ENCODE measurements at regions of chr6 and their contacts with region 1.

Region 1: DNA sequence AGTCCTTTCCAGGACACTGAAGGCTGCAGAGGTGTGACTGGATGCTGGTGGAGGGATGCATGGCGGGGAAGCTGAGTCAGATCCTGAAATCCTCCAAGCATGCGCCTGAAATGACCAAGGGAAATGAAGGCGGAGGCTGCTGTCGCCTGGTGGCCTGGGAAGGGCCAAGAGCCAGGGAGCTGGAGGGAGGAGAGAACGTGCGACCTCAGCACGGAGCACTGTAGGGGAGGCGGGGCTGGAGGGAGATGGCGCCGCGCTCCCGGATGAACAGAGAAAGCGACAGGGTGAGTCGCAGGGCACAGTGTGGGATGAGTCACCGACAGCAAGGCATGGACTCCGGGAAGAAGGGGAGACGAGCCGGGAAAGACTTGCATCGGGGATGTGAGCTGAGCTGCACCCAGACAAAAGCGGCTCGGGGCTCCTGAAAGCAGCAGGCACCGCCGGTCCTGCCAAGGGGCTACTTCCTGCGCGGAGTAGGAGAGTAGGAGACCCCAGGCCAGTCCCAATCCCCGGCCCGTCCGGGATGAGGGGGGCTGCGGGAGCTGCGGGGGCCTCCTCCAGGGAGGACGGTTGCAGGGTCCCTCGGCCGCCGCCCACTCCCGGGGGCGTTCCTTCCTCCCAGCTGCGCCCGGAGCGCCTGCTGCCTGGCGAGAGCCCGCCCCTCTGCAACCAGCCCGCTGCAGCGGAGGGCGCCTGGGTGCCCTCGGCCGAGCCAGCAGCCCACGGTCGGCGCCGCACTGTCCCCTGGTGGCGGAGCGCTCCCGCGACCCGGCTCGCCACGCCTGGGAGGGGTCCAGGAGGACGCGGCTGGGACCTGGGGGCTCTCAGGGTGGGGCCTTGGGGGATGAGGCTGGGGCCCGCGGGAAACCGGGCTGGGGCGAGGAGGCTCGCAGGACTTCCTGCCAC is 11.0 kb upstream of the NQO2 start:
- DNase-seq: peak; percentile 89
- H3K4me3 ChIP-seq: peak overlapping the region; percentile 75
- H3K27ac ChIP-seq: peak overlapping the region; percentile 89
- H3K4me1 ChIP-seq: peaks cover 16% of the 10 kb centered on the region
- CTCF ChIP-seq: peak; percentile 80

Region 2: DNA sequence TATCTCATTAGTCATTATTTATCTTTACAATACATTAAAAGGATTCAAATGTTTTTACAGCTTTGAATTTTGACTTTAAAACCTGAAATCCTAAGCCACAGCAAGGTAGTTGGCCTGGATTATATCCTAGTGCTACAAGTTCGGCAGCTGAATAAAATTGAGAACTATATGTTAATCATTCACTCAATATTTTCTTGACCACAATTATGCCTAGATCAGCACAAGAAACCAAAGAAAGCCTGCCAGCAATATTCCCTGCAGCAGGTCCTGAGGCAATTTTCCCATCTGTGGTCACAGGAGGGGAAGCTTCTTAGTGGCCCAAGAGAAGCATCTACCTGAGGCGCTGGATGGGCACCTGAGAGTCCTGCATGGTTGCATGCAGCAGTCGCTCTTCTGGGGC is 926.8 kb before region 1 on chr6:
- CTCF ChIA-PET with region 1: no interaction called
- POLR2A ChIA-PET with region 1: interaction called, 10 read pairs
- intact Hi-C with region 1: no loop called
- DNase-seq: no peak
- H3K4me3 ChIP-seq: no peak overlapping the region
- H3K27ac ChIP-seq: no peak overlapping the region
- H3K4me1 ChIP-seq: no peaks in the 10 kb centered on the region
- CTCF ChIP-seq: no peak

Region 3: DNA sequence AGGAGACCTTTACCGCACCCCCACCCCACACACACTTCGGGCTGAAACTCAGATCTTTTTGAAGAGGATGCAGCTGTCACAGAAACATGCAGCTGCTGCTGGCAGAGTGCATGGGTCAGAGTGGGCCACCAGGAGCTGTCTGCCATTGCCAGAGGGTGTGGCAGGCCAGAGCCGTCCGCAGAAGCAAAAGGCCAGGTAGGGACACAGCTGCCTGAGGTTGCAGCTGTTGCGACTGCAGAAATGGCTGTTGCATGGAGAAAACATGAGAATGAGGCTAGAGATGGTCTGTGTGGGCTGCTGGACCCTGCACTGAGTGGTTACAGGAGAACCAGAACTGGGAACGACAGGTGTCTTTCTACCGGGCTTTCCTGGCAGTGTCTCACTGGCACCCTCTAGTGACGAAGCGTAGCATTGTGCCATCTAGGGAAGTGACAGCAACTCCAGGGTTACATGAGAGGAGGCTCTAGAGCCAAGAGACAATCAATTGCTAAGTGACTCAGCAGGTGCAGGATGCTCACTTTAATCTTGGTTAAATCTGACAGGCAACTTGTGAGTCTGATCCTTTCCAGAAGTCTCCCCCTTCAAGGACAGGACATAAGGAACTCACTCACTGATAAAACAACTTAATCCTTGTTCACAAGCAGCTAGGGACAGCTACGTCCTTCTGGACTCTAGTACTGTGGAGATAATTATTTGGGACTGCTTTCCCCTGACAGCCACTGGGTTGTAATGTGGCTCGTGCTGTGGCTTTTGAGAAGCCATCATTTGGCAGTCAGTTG is 56.5 kb before region 1 on chr6:
- CTCF ChIA-PET with region 1: no interaction called
- POLR2A ChIA-PET with region 1: interaction called, 4 read pairs
- intact Hi-C with region 1: loop called (anchors 1 kb)
- DNase-seq: peak; percentile 90
- H3K4me3 ChIP-seq: peak overlapping the region; percentile 51
- H3K27ac ChIP-seq: peak overlapping the region; percentile 30
- H3K4me1 ChIP-seq: peaks cover 25% of the 10 kb centered on the region
- CTCF ChIP-seq: peak; percentile 99

Region 4: DNA sequence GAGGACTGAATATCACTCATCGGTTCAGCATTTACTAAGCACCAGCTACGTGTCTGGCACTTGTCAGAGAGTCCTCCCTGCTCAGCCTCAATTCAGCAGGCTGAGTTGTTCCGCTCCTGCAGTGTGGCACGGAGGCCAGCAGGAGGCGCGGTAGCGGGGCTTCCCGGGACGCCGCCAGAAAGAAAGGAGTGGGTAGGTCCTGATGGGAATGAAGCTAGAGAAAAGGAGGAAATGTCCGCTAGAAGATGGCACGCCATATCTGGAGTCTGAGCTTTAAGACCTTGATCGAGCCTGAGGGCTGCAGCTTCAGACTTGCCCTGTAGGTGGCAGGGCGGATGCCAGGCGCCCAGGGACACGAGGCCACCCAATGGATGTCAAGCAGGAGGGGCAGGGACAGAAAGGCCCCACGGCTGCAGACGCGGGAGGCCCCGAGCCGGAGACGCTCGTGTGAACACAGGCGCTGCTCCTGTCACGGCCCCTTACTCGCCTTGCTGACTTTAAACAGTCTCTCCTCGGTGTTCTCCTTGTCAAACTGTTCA is 36.1 kb before region 1 on chr6:
- CTCF ChIA-PET with region 1: interaction called, 27 read pairs
- POLR2A ChIA-PET with region 1: interaction called, 4 read pairs
- intact Hi-C with region 1: loop called (anchors 1 kb)
- DNase-seq: peak; percentile 82
- H3K4me3 ChIP-seq: peak overlapping the region; percentile 48
- H3K27ac ChIP-seq: no peak overlapping the region
- H3K4me1 ChIP-seq: peaks cover 20% of the 10 kb centered on the region
- CTCF ChIP-seq: peak; percentile 100

Region 5: GRCh38 chr6:3052481-3053230 is 64.0 kb after region 1 on chr6:
- CTCF ChIA-PET with region 1: interaction called, 3 read pairs
- POLR2A ChIA-PET with region 1: interaction called, 11 read pairs
- intact Hi-C with region 1: no loop called
- DNase-seq: no peak
- H3K4me3 ChIP-seq: peak overlapping the region; percentile 68
- H3K27ac ChIP-seq: no peak overlapping the region
- H3K4me1 ChIP-seq: peaks cover 22% of the 10 kb centered on the region
- CTCF ChIP-seq: no peak

Region 6: DNA sequence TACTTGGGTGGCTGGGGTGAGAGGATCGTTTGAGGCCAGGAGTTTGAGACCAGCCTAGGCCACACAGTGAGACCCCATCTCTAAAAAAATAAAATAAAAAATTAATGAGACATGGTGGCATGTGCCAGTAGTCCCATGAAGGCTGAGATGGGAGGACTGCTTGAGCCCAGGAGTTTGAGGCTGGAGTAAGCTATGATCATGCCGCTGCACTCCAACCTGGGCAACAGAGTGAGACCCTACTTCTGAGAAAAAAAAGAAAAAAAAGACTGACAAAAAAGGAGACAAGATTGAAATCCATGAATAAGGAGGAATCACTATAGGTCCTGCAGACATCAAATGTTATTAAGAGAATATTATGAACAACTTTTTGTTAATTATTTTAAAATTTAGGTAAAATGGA is 106.1 kb after region 1 on chr6:
- CTCF ChIA-PET with region 1: no interaction called
- POLR2A ChIA-PET with region 1: no interaction called
- intact Hi-C with region 1: no loop called
- DNase-seq: no peak
- H3K4me3 ChIP-seq: no peak overlapping the region
- H3K27ac ChIP-seq: no peak overlapping the region
- H3K4me1 ChIP-seq: no peaks in the 10 kb centered on the region
- CTCF ChIP-seq: no peak

Region 7: DNA sequence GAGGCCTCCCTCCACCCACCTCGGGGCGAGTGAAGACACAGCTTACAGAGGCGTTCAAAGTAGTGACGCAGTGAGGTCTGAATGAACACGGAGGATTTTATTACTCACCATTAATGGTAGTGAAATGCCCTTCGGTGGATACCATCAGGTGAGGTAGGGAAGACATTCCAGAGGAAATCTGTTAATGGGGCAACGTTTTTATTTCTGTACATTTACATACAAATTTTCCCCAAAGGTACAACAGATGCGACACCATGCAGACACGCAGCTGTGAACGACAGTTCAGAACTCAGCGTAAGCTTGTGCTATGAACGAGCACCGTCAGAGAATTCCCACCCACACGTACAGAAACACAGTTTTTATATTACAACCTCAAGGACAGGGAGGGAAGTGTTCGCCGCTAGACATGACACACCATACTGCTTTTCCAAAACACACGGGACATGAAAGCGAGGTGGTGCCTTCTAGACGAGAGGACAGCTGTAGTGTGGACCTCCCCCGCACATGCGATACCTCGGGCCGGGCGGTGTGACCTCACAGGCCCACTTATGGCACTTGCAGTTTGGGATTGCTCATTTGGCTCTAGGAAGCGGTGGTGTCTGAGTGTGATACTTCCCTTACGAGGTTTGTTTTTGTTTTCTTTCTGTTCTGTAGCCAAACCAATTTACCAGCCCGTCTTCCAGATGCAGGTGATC is 280.7 kb after region 1 on chr6:
- CTCF ChIA-PET with region 1: no interaction called
- POLR2A ChIA-PET with region 1: no interaction called
- intact Hi-C with region 1: no loop called
- DNase-seq: no peak
- H3K4me3 ChIP-seq: no peak overlapping the region
- H3K27ac ChIP-seq: no peak overlapping the region
- H3K4me1 ChIP-seq: no peaks in the 10 kb centered on the region
- CTCF ChIP-seq: no peak

Region 8: DNA sequence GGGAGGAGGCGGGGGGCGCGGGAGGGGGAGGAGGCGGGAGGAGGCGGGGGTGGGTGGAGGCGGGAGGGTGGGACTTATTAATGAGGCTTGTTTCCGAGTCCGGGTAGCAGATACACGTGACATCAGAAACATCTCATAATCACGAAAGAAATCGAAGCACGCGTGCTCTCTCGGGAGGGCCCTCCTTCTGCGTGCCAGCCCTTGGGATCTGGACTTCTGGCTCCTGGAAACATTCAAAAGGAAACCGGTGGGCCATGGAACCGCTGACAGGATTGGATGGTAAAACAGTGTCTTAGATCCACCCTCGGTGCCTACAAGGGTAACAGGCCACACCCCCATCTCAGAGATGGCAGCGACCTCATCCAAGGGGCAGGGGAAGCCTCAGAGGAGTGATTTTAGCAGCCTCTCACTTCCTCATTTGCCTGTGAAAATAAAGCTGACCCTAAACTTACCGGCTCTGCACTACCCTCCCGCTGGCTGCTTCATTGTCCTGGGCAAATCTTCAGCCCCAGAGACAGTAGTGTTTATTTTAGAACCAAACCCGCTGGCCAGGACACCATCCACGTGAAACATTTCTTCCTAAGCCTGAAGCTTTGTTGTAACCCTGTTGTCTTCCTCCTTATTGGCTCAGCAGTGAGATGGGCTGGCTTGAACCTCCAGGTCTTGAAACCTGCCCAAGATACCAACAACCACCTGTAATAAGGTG is 367.5 kb after region 1 on chr6:
- CTCF ChIA-PET with region 1: no interaction called
- POLR2A ChIA-PET with region 1: no interaction called
- intact Hi-C with region 1: loop called (anchors 10 kb)
- DNase-seq: peak; percentile 95
- H3K4me3 ChIP-seq: peak overlapping the region; percentile 66
- H3K27ac ChIP-seq: peak overlapping the region; percentile 84
- H3K4me1 ChIP-seq: peaks cover 57% of the 10 kb centered on the region
- CTCF ChIP-seq: no peak

Measured in OCI-LY7 (cell line).